Cardiac septum (tissue), 1 donor: ENCODE measurements at regions of chr21 and their contacts with region 1.

Region 1: DNA sequence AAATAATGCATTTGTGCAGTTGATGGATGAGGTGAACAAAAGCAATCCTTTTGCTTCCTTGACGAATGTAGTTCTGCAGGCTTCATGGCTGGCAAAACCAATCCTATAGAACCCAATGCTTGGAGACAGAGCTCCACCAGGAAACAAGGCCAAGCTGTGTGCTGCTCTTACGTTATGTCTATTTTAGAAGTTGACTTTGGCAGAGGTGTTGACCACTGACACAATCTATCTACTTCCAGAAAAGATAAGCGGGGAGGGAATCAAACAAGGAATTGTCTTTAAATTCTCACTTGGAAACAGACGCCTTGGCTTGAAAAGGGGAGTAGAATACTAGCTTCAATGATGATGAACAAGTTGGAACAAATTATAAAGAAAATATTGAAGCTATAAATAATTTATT is 211.2 kb downstream of the SETD4 start:
- DNase-seq: no peak

Region 2: DNA sequence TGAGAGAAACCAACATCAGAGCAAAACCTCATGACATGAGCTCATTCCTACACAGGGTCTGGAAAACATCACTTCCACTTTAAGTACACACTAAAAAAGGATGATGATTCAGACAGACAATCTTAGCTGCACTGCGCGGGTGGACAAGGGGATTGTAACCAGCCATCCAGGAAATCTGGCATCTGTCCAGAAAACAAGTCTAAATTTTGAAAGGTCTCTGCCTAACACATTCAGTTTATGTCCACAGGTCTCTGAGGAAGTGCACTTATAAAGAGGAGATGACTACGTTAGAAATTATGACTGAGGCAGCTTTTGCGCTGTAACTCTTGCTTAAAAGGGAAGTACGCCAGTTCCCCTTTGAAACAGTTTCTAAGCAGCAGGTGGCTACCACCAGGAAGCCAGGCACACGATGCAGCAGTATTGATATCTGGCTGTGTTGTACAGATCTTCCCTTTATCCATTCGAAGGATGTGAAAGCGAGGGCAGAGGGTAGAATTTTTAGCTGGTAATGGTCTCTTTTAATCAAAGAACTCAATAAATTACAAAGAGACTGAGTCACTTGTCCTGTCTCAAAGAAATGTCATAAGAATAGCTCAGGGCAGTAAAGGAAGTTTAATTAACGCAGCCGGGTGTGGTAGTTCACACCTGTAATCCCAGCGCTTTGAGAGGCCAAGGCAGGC is 83.2 kb after region 1 on chr21:
- intact Hi-C with region 1: loop called (anchors 5 kb)
- DNase-seq: no peak